ENCODE measurements at regions of chr21 and their contacts with region 1.

Region 1: DNA sequence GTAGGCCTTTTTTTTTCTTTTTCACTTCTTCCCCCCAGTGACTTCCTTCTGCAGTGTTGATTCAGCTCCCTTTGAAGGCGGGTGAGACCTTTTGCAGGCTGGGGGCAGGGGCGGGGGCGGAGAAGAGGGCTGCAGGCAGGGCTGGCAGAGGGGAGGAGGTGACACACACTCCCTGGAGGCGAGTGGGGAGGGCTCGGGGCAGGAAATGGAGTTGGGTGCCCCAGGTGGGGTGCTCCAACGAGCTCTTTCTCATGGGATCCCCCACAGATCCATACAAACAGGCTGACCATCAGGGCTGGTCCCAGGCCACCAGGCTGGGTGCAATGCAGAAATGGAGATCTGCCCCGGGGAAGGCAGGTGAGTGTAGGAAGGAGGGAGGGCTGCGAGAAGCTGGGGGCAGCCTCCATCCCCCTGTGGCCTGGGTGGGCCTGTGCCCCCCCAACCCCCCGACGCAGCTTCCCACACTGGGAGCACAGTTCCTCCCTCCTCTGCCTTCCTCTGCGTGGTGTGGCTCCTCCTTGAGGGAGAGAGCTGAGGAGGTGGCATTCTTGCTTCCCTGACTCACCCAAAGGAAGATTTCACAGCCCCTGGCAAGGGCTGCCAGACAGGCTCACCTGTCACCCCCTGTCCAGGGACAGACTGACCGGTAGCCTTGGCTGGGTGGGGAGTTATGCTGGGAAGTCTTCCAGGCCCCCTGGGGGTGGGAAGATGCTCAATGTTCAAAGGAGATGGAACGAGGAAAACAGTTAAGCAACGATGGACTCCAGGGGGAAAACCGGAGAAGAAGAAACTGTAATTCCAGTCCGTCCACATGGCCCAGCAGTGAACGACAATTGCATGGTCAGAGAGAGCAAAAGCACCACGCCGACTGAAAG is 7.1 kb upstream of the ITGB2 start:
- DNase-seq: peak; percentile 56
- ATAC-seq: peak; percentile 44
- H3K4me3 ChIP-seq: no peak overlapping the region
- H3K27ac ChIP-seq: no peak overlapping the region; the same call in 1 of the 2 replicates
- H3K4me1 ChIP-seq: peaks cover 28% of the 10 kb centered on the region
- H3K27me3 ChIP-seq: peaks cover 62% of the 10 kb centered on the region
- CTCF ChIP-seq: no peak
- POLR2A ChIP-seq: no peak
- RAD21 ChIP-seq: no peak

Region 2: DNA sequence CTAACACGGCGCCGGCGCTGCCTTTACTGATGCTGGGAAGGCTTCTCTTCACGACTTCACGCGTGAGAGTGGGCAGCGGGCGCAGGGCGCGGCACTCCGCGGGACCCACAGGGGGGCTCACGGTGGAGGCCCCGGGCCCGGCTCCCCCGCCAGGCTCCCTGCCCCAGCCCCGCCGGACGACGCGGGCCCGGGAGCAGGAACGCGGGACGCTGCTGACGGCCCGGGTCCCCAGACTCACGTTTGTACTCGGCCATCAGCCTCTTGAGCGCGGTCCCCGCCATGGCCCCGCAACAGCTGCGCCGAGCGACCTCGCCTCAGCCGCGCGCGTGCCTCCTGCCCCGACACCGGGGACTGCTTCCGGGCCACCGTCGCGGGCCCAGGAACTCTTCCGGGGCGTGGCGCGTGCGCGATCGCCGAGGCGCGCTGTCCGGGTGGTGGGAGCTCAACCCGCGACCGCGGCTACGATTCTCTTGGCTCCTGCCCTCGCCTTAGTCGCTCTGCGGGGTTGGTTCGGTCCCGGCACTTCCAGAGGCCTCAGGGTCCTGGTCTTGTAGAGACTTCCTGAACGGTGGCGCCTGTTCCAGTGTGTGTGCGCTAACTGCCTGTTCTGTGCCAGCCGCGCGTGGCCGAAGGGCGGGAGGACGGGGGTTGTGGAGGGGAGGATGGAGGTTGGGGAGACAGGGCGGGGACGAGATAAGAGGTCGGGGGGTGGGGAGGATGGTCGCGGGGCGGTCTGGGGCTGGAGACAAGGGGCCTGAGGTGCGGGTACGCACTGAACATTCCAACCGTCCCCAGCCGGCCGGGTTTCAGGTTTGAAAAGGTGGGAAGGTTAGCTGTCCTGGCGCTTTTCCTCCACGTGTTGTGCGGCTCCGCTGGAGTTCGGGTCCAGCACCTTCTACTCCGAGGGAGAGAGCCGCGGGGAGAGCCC is 126.1 kb before region 1 on chr21 and contains the start of gene UBE2G2:
- CTCF ChIA-PET with region 1: no interaction called
- POLR2A ChIA-PET with region 1: no interaction called
- dilution Hi-C with region 1: no loop called
- in situ Hi-C with region 1: no loop called
- intact Hi-C with region 1: loop called (anchors 2 kb)
- DNase-seq: peak; percentile 65
- ATAC-seq: peak; percentile 91
- H3K4me3 ChIP-seq: peak within 1 kb of the TSS; percentile 100
- H3K27ac ChIP-seq: peak within 1 kb of the TSS; percentile 98
- H3K4me1 ChIP-seq: peaks cover 2% of the 10 kb centered on the region; the same call in 1 of the 2 replicates
- H3K27me3 ChIP-seq: no peaks in the 10 kb centered on the region
- CTCF ChIP-seq: no peak
- POLR2A ChIP-seq: peak; percentile 39; the same call in 1 of the 2 replicates
- RAD21 ChIP-seq: no peak
- total RNA-seq, gene UBE2G2: 65.4 and 75.8 TPM in 2 replicates

Region 3: DNA sequence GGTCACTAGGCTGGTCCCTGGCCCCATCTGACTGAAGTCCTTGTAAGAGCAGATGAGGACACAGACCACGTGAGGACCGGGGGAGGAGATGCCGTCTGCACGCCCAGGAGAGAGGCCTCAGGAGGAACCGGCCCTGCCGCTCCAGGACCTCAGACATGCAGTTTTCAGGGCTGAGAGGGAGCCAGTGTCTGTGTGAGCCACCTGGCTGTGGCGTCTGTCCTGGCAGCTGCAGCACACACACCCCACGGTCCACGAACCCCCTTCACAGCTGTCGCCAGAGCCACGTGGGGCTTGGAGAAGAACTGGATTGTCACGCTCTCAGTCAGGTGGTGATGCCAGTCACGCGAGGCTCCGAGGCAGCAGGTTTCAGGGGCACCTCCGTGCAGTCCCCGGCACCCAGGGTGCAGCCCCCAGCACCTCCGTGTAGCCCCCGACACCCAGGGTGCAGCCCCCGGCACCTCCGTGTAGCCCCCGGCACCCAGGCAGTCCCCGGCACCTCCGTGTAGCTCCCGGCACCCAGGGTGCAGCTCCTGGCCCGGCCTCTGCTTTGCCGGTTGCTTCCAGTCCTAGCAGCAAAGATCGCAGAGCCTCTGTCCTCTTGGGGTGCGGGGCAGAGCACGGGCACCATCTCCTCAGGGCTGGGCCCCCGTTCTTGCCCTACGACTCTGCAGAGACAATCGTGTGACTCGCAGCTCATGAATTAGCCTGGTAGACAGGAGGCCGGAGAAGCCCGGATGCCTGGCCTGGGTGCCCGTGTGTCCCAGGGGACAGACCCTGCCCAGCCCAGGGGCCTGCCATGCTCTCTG is 91.0 kb before region 1 on chr21:
- CTCF ChIA-PET with region 1: no interaction called
- POLR2A ChIA-PET with region 1: no interaction called
- dilution Hi-C with region 1: no loop called
- in situ Hi-C with region 1: no loop called
- intact Hi-C with region 1: no loop called
- DNase-seq: no peak
- ATAC-seq: no peak; the same call in none of the 2 replicates
- H3K4me3 ChIP-seq: no peak overlapping the region
- H3K27ac ChIP-seq: no peak overlapping the region
- H3K4me1 ChIP-seq: peaks cover 5% of the 10 kb centered on the region; the same call in 1 of the 2 replicates
- H3K27me3 ChIP-seq: peaks cover 26% of the 10 kb centered on the region
- CTCF ChIP-seq: no peak
- POLR2A ChIP-seq: no peak
- RAD21 ChIP-seq: no peak

Region 4: GRCh38 chr21:44873356-44874239 is 54.2 kb before region 1 on chr21 and contains the start of gene PTTG1IP:
- CTCF ChIA-PET with region 1: no interaction called
- POLR2A ChIA-PET with region 1: no interaction called
- dilution Hi-C with region 1: no loop called
- in situ Hi-C with region 1: no loop called
- intact Hi-C with region 1: loop called (anchors 5 kb)
- DNase-seq: peak; percentile 94
- ATAC-seq: peak; percentile 81
- H3K4me3 ChIP-seq: peak within 1 kb of the TSS; percentile 90
- H3K27ac ChIP-seq: peak within 1 kb of the TSS; percentile 85
- H3K4me1 ChIP-seq: peaks cover 17% of the 10 kb centered on the region
- H3K27me3 ChIP-seq: no peaks in the 10 kb centered on the region
- CTCF ChIP-seq: no peak
- POLR2A ChIP-seq: peak; percentile 83
- RAD21 ChIP-seq: no peak
- total RNA-seq, gene PTTG1IP: 194 and 230 TPM in 2 replicates

Region 5: GRCh38 chr21:44880762-44881585 is 46.9 kb before region 1 on chr21:
- CTCF ChIA-PET with region 1: interaction called, 4 read pairs
- POLR2A ChIA-PET with region 1: no interaction called
- dilution Hi-C with region 1: no loop called
- in situ Hi-C with region 1: loop called (anchors 5 kb)
- intact Hi-C with region 1: no loop called
- DNase-seq: peak; percentile 71
- ATAC-seq: peak; percentile 82
- H3K4me3 ChIP-seq: no peak overlapping the region
- H3K27ac ChIP-seq: no peak overlapping the region; the same call in 1 of the 2 replicates
- H3K4me1 ChIP-seq: peaks cover 6% of the 10 kb centered on the region
- H3K27me3 ChIP-seq: peaks cover 3% of the 10 kb centered on the region; the same call in 1 of the 2 replicates
- CTCF ChIP-seq: no peak
- POLR2A ChIP-seq: no peak
- RAD21 ChIP-seq: no peak

Region 6: GRCh38 chr21:44892536-44893277 is 35.1 kb before region 1 on chr21:
- CTCF ChIA-PET with region 1: interaction called, 4 read pairs
- POLR2A ChIA-PET with region 1: no interaction called
- dilution Hi-C with region 1: no loop called
- in situ Hi-C with region 1: no loop called
- intact Hi-C with region 1: loop called (anchors 1 kb)
- DNase-seq: peak; percentile 19
- ATAC-seq: peak; percentile 85
- H3K4me3 ChIP-seq: no peak overlapping the region
- H3K27ac ChIP-seq: no peak overlapping the region
- H3K4me1 ChIP-seq: no peaks in the 10 kb centered on the region
- H3K27me3 ChIP-seq: peaks cover 69% of the 10 kb centered on the region
- CTCF ChIP-seq: peak; percentile 73
- POLR2A ChIP-seq: no peak
- RAD21 ChIP-seq: peak; percentile 56

Measured in IMR-90 (cell line).